ENCODE measurements at regions of chr11 and their contacts with region 1.

Region 1: GRCh38 chr11:72573072-72573854 is 101.0 kb downstream of the PDE2A start:
- DNase-seq: peak; percentile 41
- H3K4me3 Mint-ChIP-seq: no peak overlapping the region
- H3K27ac Mint-ChIP-seq: no peak overlapping the region
- H3K4me1 Mint-ChIP-seq: peaks cover 39% of the 10 kb centered on the region
- H3K27me3 Mint-ChIP-seq: no peaks in the 10 kb centered on the region
- CTCF ChIP-seq: peak; percentile 67

Region 2: GRCh38 chr11:72483412-72484186 is 89.7 kb before region 1 on chr11:
- CTCF ChIA-PET with region 1: interaction called, 12 read pairs
- POLR2A ChIA-PET with region 1: no interaction called
- intact Hi-C with region 1: loop called (anchors 1 kb)
- DNase-seq: peak; percentile 44
- H3K4me3 Mint-ChIP-seq: no peak overlapping the region
- H3K27ac Mint-ChIP-seq: peak overlapping the region; percentile 91
- H3K4me1 Mint-ChIP-seq: peaks cover 15% of the 10 kb centered on the region
- H3K27me3 Mint-ChIP-seq: no peaks in the 10 kb centered on the region
- CTCF ChIP-seq: no peak